WTC11 (cell line): ENCODE measurements at regions of chr10 and their contacts with region 1.

Region 1: GRCh38 chr10:118543714-118544400 is 51.6 kb downstream of the PRLHR start:
- DNase-seq: peak; percentile 81
- ATAC-seq: peak; percentile 99
- H3K4me3 Mint-ChIP-seq: no peak overlapping the region
- H3K27ac Mint-ChIP-seq: no peak overlapping the region
- H3K4me1 Mint-ChIP-seq: no peaks in the 10 kb centered on the region
- H3K27me3 Mint-ChIP-seq: no peaks in the 10 kb centered on the region; the same call in 1 of the 2 replicates
- CTCF ChIP-seq: peak; percentile 24; the same call in 1 of the 2 replicates

Region 2: DNA sequence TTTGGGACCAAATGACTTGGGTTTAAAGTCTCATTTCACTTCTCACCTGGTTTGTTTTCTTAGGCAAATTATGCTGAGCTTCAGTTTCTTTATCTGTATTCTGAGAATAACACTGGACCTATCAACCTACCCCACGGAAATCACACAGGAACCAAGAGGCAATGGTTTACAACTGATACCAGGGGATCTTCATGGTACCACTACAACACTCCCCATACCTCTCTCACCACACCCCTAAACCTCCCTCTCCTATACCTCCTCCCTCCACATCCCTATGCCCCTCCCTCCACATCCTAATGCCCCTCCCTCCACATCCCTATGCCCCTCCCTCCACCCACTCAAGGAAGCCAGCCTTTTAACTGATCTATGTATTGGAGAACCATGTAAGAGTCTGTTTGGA is 211.6 kb before region 1 on chr10:
- CTCF ChIA-PET with region 1: no interaction called
- POLR2A ChIA-PET with region 1: no interaction called
- DNase-seq: no peak
- ATAC-seq: peak; percentile 91
- H3K4me3 Mint-ChIP-seq: no peak overlapping the region
- H3K27ac Mint-ChIP-seq: no peak overlapping the region
- H3K4me1 Mint-ChIP-seq: no peaks in the 10 kb centered on the region
- H3K27me3 Mint-ChIP-seq: no peaks in the 10 kb centered on the region
- CTCF ChIP-seq: no peak

Region 3: DNA sequence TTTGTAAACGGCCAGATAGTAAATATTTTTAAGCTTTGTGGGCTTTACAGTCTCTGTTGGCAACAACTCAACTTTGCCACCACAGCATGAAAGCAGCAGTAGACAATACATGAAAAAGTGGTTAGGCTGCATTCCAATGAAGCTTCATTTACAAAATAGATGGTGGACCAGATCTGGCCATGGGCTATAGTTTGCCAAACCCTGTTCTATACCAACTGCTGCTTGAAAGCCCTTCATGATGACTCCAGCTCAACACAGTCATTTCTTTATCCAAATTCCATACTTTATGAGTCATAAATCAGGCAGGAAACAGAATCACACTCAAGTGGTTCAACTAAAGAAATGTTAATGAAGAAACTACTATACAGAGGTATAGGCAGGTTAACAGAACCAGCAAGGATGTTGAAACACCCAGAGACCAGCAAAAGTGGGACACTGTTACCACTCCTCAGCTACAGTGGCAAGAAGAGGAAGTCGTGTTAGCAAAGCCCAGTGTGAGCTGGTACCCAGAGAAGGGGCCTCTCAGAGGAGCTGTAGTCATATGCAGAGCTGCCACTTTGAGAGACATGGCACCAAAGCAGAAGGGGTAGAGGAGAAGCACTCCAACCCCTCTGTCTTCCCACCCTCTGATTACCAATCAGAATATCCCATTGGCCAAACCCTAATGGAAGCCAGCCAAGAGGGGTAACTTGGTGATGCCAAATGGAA is 20.9 kb before region 1 on chr10:
- CTCF ChIA-PET with region 1: interaction called, 10 read pairs
- POLR2A ChIA-PET with region 1: no interaction called
- DNase-seq: no peak
- ATAC-seq: peak; percentile 76
- H3K4me3 Mint-ChIP-seq: 0 out of 2 replicates have a peak overlapping the region, but pooled peaks have one; percentile 14
- H3K27ac Mint-ChIP-seq: no peak overlapping the region; the same call in 1 of the 2 replicates
- H3K4me1 Mint-ChIP-seq: peaks cover 12% of the 10 kb centered on the region
- H3K27me3 Mint-ChIP-seq: no peaks in the 10 kb centered on the region; the same call in 1 of the 2 replicates
- CTCF ChIP-seq: no peak

Region 4: DNA sequence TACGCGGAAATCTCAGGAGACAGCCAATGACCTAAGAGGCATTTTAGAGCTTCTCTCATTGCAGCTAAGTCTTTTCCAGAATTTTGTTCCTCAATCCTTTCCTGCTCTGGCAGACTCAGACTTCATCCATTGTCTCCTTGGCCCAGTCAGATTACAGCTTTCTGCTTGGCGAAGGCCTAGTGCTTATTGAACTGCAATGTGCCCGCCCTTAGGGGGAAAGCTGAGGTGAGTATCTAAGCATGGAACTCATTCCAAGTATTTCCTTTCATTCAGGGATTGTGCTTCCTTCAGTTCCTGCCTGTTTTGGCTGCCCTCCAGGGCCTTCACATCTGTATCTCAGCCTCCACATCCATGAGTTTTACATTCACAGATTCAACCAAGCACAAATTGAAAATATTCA is 14.1 kb after region 1 on chr10:
- CTCF ChIA-PET with region 1: interaction called, 10 read pairs
- POLR2A ChIA-PET with region 1: no interaction called
- DNase-seq: no peak
- ATAC-seq: peak; percentile 58; the same call in 1 of the 2 replicates
- H3K4me3 Mint-ChIP-seq: no peak overlapping the region
- H3K27ac Mint-ChIP-seq: no peak overlapping the region
- H3K4me1 Mint-ChIP-seq: peaks cover 28% of the 10 kb centered on the region
- H3K27me3 Mint-ChIP-seq: no peaks in the 10 kb centered on the region; the same call in 1 of the 2 replicates
- CTCF ChIP-seq: no peak